ENCODE measurements at regions of chr10 and their contacts with region 1.

Region 1: DNA sequence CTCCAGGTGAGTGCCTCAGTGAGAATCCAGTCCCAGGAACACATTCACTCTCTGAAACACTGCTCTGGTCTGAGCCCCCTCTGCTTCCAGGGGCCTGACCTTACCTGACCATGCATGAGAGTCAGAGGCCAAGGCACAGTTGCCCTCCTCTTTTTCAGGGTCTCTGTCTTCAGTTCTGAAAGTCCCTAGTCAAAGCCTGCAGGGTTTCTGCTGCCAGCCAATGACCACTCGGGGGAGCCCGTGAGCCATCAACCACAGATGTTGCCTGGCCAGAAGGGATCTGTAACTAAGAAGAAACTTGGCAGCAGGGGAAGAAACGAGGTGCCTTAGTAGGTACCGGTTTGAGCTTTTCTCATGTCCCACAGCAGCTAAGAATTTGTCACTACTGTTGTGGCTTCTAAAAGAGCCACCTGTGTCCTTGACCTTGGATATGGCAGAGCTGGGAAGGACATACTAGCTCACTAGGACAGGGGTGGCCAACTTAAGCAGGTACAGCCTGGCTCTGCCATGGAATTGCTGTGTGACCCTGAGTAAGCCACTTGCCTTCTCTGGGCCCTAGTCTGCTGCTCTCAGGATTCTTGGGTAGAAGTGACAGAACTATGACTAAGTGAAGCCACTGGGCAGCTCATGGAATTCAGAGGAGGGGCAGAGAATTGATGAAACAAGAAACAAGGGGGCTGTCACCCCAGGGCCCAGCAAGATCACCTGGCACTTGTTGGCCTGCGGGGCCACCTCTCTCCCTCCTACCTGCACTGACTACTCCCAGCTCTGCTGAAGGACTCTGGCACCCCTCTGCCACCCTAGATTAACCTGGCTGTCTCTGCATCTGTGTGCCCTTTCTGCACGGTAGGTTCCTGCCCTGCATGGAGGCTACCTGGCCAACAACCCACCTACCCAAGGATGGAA is 83.8 kb upstream of the GPR26 start:
- DNase-seq: peak; percentile 72
- ATAC-seq: peak; percentile 76
- H3K4me3 ChIP-seq: no peak overlapping the region
- H3K27ac ChIP-seq: no peak overlapping the region
- H3K4me1 ChIP-seq: no peaks in the 10 kb centered on the region
- H3K27me3 ChIP-seq: peaks cover 31% of the 10 kb centered on the region
- CTCF ChIP-seq: peak; percentile 84

Region 2: DNA sequence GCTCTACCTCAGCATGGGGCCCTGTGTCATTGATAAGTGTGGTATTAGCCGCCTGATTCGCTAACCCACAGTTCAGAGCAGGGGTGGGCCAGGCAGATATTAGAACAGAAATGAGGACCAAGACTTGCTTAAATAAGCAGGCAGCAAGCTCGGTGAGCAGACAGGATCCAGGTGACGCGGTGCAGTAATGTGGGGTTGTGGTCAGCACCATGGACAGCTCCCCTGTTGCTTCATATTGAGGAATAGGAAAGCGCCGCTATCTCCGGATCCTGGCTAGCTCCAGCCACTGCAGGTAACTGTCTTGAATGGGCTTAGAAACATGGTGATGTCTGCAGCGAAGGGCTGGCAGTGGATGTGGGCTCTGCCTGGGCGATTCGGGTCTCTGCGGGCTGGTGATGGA is 32.6 kb after region 1 on chr10:
- CTCF ChIA-PET with region 1: no interaction called
- POLR2A ChIA-PET with region 1: no interaction called
- intact Hi-C with region 1: no loop called
- DNase-seq: peak; percentile 64
- ATAC-seq: no peak
- H3K4me3 ChIP-seq: no peak overlapping the region
- H3K27ac ChIP-seq: no peak overlapping the region
- H3K4me1 ChIP-seq: no peaks in the 10 kb centered on the region
- H3K27me3 ChIP-seq: peaks cover 8% of the 10 kb centered on the region; the same call in 1 of the 2 replicates
- CTCF ChIP-seq: no peak

Region 3: DNA sequence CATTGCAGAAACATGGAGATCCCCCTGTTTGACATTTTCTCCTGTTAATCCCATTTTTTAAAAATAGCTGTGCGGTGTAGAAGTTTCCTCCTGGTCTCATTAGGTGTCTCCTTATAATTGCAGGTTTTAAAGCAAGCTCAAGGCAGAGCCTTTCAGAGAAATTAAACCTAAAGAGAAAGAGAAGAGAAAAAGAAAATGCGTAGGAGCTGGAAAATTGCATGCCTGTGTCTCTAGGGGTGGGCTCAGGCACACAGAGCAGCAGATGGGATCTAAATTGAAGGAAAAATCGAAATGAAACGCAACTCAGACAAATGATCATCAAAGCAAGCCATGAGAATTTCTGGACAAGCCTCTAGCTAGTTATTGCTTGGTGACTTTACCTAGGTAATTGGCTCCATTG is 123.9 kb after region 1 on chr10:
- CTCF ChIA-PET with region 1: no interaction called
- POLR2A ChIA-PET with region 1: no interaction called
- intact Hi-C with region 1: no loop called
- DNase-seq: no peak
- ATAC-seq: no peak
- H3K4me3 ChIP-seq: no peak overlapping the region
- H3K27ac ChIP-seq: no peak overlapping the region
- H3K4me1 ChIP-seq: no peaks in the 10 kb centered on the region
- H3K27me3 ChIP-seq: peaks cover 23% of the 10 kb centered on the region
- CTCF ChIP-seq: no peak

Region 4: GRCh38 chr10:123967396-123968243 is 385.3 kb after region 1 on chr10:
- CTCF ChIA-PET with region 1: no interaction called
- POLR2A ChIA-PET with region 1: no interaction called
- intact Hi-C with region 1: loop called (anchors 1 kb)
- DNase-seq: peak; percentile 63
- ATAC-seq: peak; percentile 83
- H3K4me3 ChIP-seq: no peak overlapping the region
- H3K27ac ChIP-seq: no peak overlapping the region
- H3K4me1 ChIP-seq: no peaks in the 10 kb centered on the region
- H3K27me3 ChIP-seq: peaks cover 25% of the 10 kb centered on the region
- CTCF ChIP-seq: peak; percentile 82